Gastrocnemius medialis (tissue), 4 donors: ENCODE measurements at regions of chr17 and their contacts with region 1.

Region 1: DNA sequence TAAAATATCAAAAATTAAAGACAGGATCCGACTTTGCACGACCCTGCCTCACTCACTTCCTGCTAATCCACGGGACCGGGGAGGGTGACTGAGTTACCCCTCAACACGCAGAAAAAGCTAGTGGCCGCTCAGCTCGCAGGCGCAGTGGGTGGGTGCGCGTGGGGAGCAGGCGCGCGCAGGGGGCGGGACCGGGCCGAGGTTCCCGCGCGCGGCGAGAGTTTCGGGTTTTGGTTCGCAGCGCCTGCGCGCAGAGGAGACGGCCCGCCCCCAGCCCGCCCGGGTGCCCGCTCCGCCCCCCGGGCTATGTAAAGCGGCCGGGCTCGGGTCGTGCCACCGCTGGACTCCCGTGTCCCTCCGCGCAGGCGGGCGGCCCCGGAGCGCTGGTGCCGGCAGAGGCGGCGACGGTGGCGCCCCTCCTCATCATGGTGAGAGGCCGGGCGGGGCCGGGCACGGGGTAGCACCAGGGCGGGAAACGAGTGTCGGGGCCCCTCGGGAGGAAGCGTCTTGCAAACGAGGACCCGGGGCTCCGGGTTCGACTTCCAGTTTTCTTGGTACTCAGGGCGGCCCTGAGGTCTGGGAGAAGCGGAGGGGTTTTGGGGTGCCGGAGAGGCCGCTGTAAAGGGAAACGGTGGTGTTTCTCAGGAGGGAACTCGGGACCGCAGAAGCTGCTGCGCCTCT is at the start of gene CNP:
- DNase-seq: peak; percentile 80 to 89
- ATAC-seq: peak; percentile 79 to 86
- H3K4me3 ChIP-seq: peak within 1 kb of the TSS; percentile 86 to 97 (median 92)
- H3K27ac ChIP-seq: peak within 1 kb of the TSS; percentile 91 to 95 (median 92)
- H3K4me1 ChIP-seq: peaks cover 24 to 27% of the 10 kb centered on the region in 2 donors
- H3K27me3 ChIP-seq: no peaks in the 10 kb centered on the region
- CTCF ChIP-seq: peak in 1 of 5 experiments; percentile 9
- POLR2A ChIP-seq: peak; percentile 85 to 89
- total RNA-seq, gene CNP: 15.1 to 26.2 (median 20.4) TPM

Region 2: GRCh38 chr17:41930009-41930832 is 36.4 kb before region 1 on chr17 and contains the start of gene ODAD4:
- in situ Hi-C with region 1: no loop called
- intact Hi-C with region 1: loop called (anchors 1 kb)
- DNase-seq: peak; percentile 91 to 96
- ATAC-seq: peak; percentile 96 to 98
- H3K4me3 ChIP-seq: peak within 1 kb of the TSS; percentile 41 to 70 (median 62)
- H3K27ac ChIP-seq: peak within 1 kb of the TSS; percentile 84 to 97 (median 90)
- H3K4me1 ChIP-seq: peaks cover 5 to 12% of the 10 kb centered on the region in 2 donors
- H3K27me3 ChIP-seq: no peaks in the 10 kb centered on the region
- CTCF ChIP-seq: peak; percentile 56 to 69 (median 62)
- POLR2A ChIP-seq: peak; percentile 53 to 65
- total RNA-seq, gene ODAD4: 0.13 to 1.3 (median 0.20) TPM in 3 of 4 donors, not detected in the other

Region 3: DNA sequence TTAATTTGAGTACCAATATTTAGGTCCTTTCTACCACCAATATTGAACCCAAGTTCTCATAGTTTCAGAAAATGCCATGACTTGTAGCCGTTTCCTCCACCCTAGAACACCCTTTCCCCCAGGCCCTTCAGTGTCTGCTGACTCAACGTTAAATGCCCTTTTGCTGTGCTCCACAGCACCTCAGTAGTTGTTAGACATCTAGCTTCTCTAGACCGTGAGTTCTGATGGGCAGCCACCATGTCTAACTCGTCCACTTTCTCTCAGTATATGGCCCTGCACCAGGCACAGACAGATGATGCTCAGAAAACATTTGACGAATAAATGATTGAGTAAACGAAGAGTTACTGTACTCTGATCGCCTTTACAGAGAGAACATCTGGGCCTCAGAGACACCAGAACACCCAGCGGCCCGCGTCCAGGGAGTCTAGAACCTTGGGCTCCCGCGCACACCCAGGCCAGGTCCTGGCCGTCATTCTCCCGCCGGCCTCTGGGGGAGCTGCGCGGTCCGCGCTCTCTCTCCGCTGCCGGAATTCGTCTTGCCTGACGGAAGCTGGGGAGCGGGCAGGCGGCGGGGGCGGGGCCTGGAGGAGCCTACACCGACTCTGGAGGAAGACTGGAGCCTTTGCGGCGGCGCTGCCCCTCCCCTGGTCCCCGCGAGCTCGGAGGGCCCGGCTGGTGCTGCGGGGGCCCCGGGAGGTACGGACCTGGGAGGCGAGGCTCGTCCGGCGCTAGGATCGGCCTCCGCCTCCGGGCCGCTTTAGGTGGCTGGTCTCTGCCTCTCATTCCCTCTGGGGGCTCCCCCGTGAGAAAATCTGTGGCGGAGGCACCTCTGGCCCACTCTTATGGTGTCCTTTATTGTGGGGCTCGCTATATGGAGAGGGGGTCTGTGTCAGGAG is 53.2 kb after region 1 on chr17 and contains the start of gene NKIRAS2:
- in situ Hi-C with region 1: no loop called
- intact Hi-C with region 1: loop called (anchors 2 kb)
- DNase-seq: peak; percentile 91 to 93
- ATAC-seq: peak; percentile 59 to 66
- H3K4me3 ChIP-seq: peak within 1 kb of the TSS; percentile 77 to 99 (median 96)
- H3K27ac ChIP-seq: peak within 1 kb of the TSS; percentile 90 to 96 (median 94)
- H3K4me1 ChIP-seq: peaks cover 50 to 51% of the 10 kb centered on the region in 2 donors
- H3K27me3 ChIP-seq: no peaks in the 10 kb centered on the region
- CTCF ChIP-seq: peak; percentile 91 to 98 (median 96)
- POLR2A ChIP-seq: peak; percentile 58 to 66
- total RNA-seq, gene NKIRAS2: 48.8 to 77.0 (median 63.4) TPM

Region 4: GRCh38 chr17:42101513-42102319 is 135.1 kb after region 1 on chr17:
- in situ Hi-C with region 1: no loop called
- intact Hi-C with region 1: loop called (anchors 1 kb)
- DNase-seq: peak; percentile 37 to 83
- ATAC-seq: peak; percentile 85 to 96
- H3K4me3 ChIP-seq: peak overlapping the region in 1 of 4 donors; percentile 9
- H3K27ac ChIP-seq: no peak overlapping the region
- H3K4me1 ChIP-seq: peaks cover 12 to 15% of the 10 kb centered on the region in 2 donors
- H3K27me3 ChIP-seq: peaks cover 0 to 11% (median 8%) of the 10 kb centered on the region in 3 donors
- CTCF ChIP-seq: peak; percentile 89 to 96 (median 93)
- POLR2A ChIP-seq: no peak

Region 5: GRCh38 chr17:42112552-42113176 is 146.1 kb after region 1 on chr17 and contains the start of gene DHX58:
- in situ Hi-C with region 1: loop called (anchors 5 to 10 kb)
- intact Hi-C with region 1: loop called (anchors 2 kb)
- DNase-seq: peak; percentile 59 to 70
- ATAC-seq: peak; percentile 86 to 87
- H3K4me3 ChIP-seq: peak within 1 kb of the TSS; percentile 52 to 66 (median 64)
- H3K27ac ChIP-seq: peak within 1 kb of the TSS; percentile 85 to 93 (median 87)
- H3K4me1 ChIP-seq: peaks cover 16% of the 10 kb centered on the region in 2 donors
- H3K27me3 ChIP-seq: no peaks in the 10 kb centered on the region
- CTCF ChIP-seq: no peak
- POLR2A ChIP-seq: peak; percentile 24 to 35
- total RNA-seq, gene DHX58: 1.1 to 4.4 (median 3.1) TPM

Region 6: GRCh38 chr17:42153919-42154742 is 187.5 kb after region 1 on chr17:
- in situ Hi-C with region 1: no loop called
- intact Hi-C with region 1: loop called (anchors 2 kb)
- DNase-seq: peak in 1 of 2 donors; percentile 29
- ATAC-seq: peak; percentile 22 to 32
- H3K4me3 ChIP-seq: peak overlapping the region; percentile 84 to 93 (median 86)
- H3K27ac ChIP-seq: peak overlapping the region; percentile 85 to 94 (median 91)
- H3K4me1 ChIP-seq: peaks cover 26% of the 10 kb centered on the region in 2 donors
- H3K27me3 ChIP-seq: no peaks in the 10 kb centered on the region
- CTCF ChIP-seq: no peak
- POLR2A ChIP-seq: no peak